ENCODE measurements at regions of chr2 and their contacts with region 1.

Region 1: DNA sequence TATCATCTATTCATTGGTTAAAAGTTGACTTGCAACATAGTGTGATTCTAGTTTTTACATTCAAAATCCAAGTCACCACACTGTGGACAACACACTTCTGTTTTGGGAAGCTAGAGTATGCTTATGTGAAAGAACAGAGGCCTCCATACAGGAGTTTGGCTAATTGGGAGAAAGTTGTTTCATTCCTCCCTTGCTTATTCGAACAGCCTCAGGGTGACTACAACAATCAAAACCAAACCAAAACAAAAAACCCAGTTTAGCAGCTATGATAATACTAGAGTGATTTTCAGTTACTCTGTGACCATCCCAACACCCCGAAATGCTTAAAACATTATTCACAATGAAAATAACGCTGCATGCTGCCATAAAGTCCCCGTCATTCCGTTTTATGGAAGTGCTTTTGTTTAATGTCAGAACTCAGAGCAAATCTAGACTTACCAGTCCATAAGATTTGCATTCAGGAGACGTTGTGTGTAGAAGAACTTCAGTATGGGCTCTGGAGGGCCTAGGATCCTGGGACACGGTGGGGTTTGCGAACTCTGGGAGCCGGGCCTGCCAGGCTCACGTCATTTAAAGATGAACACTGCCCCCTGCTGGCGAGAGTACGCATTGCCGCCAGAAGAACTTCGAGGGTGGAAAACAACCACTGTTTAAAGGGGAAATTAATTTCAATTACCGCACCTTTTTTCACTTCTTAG is 111.4 kb downstream of the FTCDNL1 start:
- DNase-seq: peak; percentile 56
- H3K4me3 ChIP-seq: peak overlapping the region in 1 of 2 experiments; percentile 46; a peak in 1 of 4 replicates
- H3K27ac ChIP-seq: no peak overlapping the region
- H3K4me1 ChIP-seq: peaks cover 0 to 13% of the 10 kb centered on the region in 2 experiments; a peak in 1 of 4 replicates
- H3K27me3 ChIP-seq: peaks cover 24% of the 10 kb centered on the region; the same call in 1 of the 2 replicates
- CTCF ChIP-seq: peak; percentile 97
- EP300 ChIP-seq: no peak
- RAD21 ChIP-seq: peak; percentile 82

Region 2: DNA sequence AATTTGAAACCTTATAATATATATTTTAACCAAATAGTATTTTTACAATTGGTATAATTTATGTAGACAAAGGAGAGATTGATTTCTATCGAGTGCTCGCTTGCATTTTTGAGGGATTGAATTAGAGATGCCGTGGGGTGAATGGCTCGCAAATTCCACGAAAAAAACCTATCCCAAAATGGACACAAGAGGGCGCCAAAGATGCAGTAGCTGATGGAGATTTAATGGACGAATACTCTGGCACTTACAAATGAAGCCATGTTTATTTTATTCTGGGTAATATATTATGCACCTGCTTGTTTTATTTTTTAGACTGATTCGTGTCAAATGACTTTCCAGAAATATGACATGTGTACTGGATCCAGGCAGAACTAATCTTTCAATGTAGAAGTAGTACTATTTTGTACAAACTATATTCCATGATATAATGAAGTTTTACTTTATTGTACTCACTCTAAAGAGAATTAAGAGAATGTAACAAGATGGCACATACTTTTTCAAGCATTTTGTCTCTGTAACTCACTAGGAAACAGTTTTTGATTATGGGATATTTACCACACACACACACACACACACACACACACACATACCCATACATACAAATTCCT is 1429.8 kb before region 1 on chr2:
- CTCF ChIA-PET with region 1: interaction called, 88 read pairs
- POLR2A ChIA-PET with region 1: no interaction called
- DNase-seq: peak; percentile 48
- H3K4me3 ChIP-seq: no peak overlapping the region
- H3K27ac ChIP-seq: no peak overlapping the region
- H3K4me1 ChIP-seq: no peaks in the 10 kb centered on the region
- H3K27me3 ChIP-seq: peaks cover 22% of the 10 kb centered on the region
- CTCF ChIP-seq: peak; percentile 92
- EP300 ChIP-seq: no peak
- RAD21 ChIP-seq: peak; percentile 67

Region 3: DNA sequence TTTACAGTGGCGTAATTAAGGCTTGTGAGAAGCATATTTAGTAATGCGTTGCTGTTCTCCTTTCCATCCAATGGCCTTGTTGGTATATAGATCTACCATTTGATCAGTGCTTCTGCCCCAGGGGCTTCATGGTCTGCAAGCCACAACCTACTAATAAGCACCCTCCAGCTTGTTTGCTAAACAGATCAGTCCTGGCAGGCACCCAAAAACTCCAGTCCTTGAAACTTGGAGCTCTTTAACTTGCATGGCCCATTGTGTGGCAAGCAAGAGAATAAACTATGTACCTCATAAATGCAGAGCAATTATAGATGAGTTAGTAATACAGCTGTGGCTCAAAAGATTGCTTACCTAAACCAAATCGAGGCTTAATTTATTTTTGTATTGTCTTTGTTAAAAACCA is 47.1 kb before region 1 on chr2:
- CTCF ChIA-PET with region 1: interaction called, 11 read pairs
- POLR2A ChIA-PET with region 1: no interaction called
- DNase-seq: peak; percentile 11
- H3K4me3 ChIP-seq: no peak overlapping the region
- H3K27ac ChIP-seq: no peak overlapping the region
- H3K4me1 ChIP-seq: no peaks in the 10 kb centered on the region
- H3K27me3 ChIP-seq: no peaks in the 10 kb centered on the region
- CTCF ChIP-seq: no peak
- EP300 ChIP-seq: no peak
- RAD21 ChIP-seq: no peak

Region 4: GRCh38 chr2:199727306-199727705 is 12.3 kb before region 1 on chr2:
- CTCF ChIA-PET with region 1: interaction called, 24 read pairs
- POLR2A ChIA-PET with region 1: no interaction called
- DNase-seq: no peak
- H3K4me3 ChIP-seq: no peak overlapping the region
- H3K27ac ChIP-seq: no peak overlapping the region
- H3K4me1 ChIP-seq: no peaks in the 10 kb centered on the region
- H3K27me3 ChIP-seq: no peaks in the 10 kb centered on the region
- CTCF ChIP-seq: no peak
- EP300 ChIP-seq: no peak
- RAD21 ChIP-seq: no peak

Region 5: DNA sequence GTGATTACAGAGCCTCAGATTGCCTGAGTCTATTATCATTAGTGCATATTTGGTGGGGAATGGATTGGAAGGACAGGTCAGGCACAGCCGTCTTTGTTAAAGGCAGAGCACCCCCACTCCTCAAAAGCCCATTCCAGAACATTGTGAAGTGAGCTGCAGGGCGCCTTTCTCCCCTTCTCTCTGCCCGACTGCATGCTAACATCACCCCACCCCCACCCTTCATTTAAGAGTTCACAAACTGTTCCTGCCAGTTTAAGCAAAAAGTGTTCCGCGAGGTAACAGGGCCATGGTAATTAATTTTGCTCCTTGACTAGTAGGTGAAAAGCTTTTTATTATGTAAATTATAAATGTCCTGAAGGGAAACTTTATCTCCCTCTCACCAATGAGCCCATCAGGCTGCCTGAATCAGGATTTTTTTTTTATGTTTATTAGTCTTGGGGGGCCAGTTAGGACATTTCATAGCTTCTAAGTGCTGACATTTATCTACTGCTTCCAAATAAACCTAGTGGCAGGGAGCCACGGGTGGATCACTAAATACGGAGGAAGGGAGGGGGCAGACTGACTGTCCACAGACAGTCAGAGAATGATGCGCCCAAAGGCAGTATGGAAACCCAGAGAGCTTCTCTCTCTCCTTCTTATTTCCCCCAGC is 12.0 kb after region 1 on chr2:
- CTCF ChIA-PET with region 1: interaction called, 42 read pairs
- POLR2A ChIA-PET with region 1: no interaction called
- DNase-seq: no peak
- H3K4me3 ChIP-seq: no peak overlapping the region
- H3K27ac ChIP-seq: no peak overlapping the region
- H3K4me1 ChIP-seq: no peaks in the 10 kb centered on the region
- H3K27me3 ChIP-seq: peaks cover 15% of the 10 kb centered on the region; the same call in 1 of the 2 replicates
- CTCF ChIP-seq: no peak
- EP300 ChIP-seq: no peak
- RAD21 ChIP-seq: no peak

Region 6: GRCh38 chr2:199760574-199760973 is 21.0 kb after region 1 on chr2:
- CTCF ChIA-PET with region 1: interaction called, 11 read pairs
- POLR2A ChIA-PET with region 1: no interaction called
- DNase-seq: no peak
- H3K4me3 ChIP-seq: no peak overlapping the region
- H3K27ac ChIP-seq: no peak overlapping the region
- H3K4me1 ChIP-seq: no peaks in the 10 kb centered on the region
- H3K27me3 ChIP-seq: peaks cover 13% of the 10 kb centered on the region; the same call in 1 of the 2 replicates
- CTCF ChIP-seq: no peak
- EP300 ChIP-seq: no peak
- RAD21 ChIP-seq: no peak

Region 7: DNA sequence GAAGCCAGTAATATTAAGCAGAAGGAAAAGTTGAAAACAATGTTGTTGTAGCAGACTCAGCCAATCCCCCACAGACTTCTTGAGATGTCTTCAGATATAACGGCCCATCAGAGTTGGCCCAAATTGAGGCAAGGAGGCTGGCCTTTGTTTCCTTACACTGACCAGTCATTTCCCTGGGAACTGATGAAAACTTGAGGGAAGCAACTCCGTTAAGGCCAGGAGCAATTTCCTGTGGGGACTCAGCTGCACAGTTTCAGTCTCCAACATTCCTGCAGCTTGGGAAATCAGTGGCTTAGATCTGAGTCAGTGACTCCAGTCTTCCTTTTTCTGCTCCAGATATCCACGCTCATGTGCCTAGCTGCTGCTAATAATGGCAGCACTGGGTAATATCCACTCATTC is 35.7 kb after region 1 on chr2:
- CTCF ChIA-PET with region 1: no interaction called
- POLR2A ChIA-PET with region 1: no interaction called
- DNase-seq: no peak
- H3K4me3 ChIP-seq: no peak overlapping the region
- H3K27ac ChIP-seq: no peak overlapping the region
- H3K4me1 ChIP-seq: no peaks in the 10 kb centered on the region
- H3K27me3 ChIP-seq: no peaks in the 10 kb centered on the region
- CTCF ChIP-seq: no peak
- EP300 ChIP-seq: no peak
- RAD21 ChIP-seq: no peak